Lower leg skin (tissue), 4 donors: ENCODE measurements at regions of chr6 and their contacts with region 1.

Region 1: DNA sequence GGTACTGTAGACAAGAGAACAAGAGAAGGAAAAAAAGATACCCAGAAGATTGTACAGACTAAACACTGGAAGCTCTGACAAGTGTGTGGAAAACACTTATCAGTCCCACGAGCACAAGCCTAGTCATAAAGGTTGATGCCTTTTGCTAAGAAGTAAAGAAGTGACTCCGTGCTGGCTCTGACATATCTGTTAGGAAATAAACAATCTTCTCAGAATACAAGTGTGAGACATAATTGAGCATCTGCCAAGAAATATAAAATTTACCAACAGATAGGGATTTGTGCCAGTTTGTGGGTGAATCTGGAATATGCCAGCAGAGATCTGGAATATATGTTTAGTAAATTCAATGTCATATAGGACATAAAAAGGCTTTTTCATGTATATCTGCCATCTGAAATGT is 258.7 kb upstream of the RNF217 start:
- DNase-seq: no peak
- H3K4me3 ChIP-seq: no peak overlapping the region
- CTCF ChIP-seq: no peak
- POLR2A ChIP-seq: no peak

Region 2: DNA sequence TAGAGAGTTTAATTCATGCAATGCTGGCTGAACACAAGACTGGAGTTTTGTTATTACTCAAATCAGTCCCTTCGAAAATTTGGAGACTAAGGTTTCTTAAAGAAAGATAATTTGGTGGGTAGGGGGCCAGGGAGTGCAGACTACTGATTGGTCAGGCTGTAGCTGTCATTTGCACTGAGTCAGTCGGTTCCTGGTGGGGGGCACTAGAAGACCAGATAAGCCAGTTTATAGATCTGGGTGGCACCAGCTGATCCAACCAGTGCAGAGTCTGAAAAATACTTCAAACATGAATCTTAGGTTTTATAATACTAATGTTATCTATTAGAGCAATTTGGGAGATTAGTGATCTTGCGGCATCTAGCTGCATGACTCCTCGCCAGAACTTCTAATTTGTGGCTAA is 369.2 kb before region 1 on chr6:
- intact Hi-C with region 1: loop called (anchors 5 kb)
- DNase-seq: no peak
- H3K4me3 ChIP-seq: no peak overlapping the region
- CTCF ChIP-seq: no peak
- POLR2A ChIP-seq: no peak

Region 3: DNA sequence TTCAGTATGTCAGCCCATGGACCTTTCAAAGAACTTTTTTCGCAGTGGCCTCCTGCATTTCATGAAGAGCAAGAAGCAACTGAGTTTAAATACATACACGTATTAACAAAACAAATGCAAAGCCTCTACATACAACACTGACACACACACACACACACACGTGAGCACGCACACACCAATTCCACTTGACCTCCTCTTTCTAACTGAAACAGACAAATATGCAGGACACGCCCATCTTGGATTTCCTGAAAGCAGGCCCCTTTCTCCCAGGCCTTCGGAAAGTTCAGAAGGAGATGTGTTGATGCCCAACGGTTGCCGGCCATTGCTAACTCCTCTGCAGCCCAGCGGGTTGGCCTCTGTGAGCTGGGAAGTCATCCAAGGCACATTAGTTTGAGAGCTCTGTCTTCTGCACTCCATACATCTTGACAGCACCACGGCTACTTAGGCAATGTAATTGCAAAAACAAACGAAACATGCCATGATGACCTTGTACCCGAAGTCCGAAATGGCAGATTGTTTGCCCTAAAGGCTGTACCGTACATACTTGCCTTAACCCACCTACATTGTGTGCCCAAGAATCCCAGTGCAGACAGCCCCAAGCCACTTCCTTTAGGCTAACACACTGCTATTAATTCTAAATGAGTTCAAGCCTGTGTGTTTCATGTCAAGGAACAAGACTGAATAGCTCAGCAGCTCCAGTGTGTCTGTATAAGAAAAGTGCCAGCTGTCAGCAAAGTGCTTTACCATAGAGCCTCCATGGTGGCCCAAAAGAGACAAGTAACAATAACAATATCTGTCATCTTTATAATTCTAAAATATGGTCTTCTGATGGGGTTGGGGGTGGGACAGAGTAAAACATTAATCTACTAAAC is 119.9 kb after region 1 on chr6:
- intact Hi-C with region 1: no loop called
- DNase-seq: no peak
- H3K4me3 ChIP-seq: no peak overlapping the region
- CTCF ChIP-seq: no peak
- POLR2A ChIP-seq: no peak